B cell (primary cell): ENCODE measurements at regions of chr20 and their contacts with region 1.

Region 1: DNA sequence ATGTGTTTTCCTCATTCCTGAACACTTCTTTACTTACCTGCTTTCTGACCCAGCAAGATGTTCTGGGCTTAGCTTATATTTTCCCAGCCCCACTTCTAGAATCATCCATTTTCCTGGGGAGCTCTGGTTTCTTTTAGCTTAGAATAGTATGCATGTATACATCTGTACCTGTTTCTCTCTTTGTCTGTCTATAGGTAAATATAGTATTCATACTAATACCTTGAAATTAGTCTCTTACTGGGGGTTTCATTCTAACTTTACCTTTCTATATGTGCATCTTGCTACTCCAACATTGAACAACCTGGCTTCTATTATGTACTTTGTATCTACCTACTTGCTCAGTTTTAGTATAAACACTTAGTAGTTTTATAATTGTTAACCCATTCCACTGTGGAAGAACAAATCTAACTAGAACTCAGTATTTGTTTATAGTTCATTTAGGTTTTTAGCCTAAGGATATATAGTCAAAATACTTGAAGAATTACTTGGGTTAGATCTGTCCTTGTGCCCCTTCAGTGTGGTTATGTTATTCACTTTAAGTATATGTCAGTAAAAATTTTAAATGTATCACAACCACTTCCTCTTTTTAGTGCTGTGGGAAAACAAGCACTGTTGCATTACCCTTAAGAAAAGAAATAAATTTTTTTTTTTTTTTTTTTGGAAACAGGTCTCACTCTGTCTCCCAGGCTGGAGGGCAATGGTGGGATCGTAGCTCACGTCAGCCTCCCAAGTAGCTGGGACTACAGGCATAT is 54.0 kb downstream of the ASXL1 start:
- DNase-seq: peak; percentile 50
- ATAC-seq: peak; percentile 54
- H3K4me3 ChIP-seq: peak overlapping the region in 1 of 5 experiments; percentile 15
- H3K4me3 Mint-ChIP-seq: peak overlapping the region; percentile 21
- H3K27ac ChIP-seq: peak overlapping the region in 1 of 2 donors; percentile 48
- H3K27ac Mint-ChIP-seq: peak overlapping the region; percentile 58
- H3K4me1 ChIP-seq: peaks cover 22% of the 10 kb centered on the region in 2 donors
- H3K4me1 Mint-ChIP-seq: peaks cover 48% of the 10 kb centered on the region
- H3K27me3 ChIP-seq: no peaks in the 10 kb centered on the region
- H3K27me3 Mint-ChIP-seq: no peaks in the 10 kb centered on the region
- CTCF ChIP-seq: no peak

Region 2: GRCh38 chr20:32378461-32378860 is 33.7 kb before region 1 on chr20:
- CTCF ChIA-PET with region 1: no interaction called
- POLR2A ChIA-PET with region 1: interaction called, 10 read pairs
- intact Hi-C with region 1: no loop called
- DNase-seq: no peak
- ATAC-seq: no peak
- H3K4me3 ChIP-seq: no peak overlapping the region
- H3K4me3 Mint-ChIP-seq: no peak overlapping the region
- H3K27ac ChIP-seq: no peak overlapping the region
- H3K27ac Mint-ChIP-seq: no peak overlapping the region
- H3K4me1 ChIP-seq: no peaks in the 10 kb centered on the region
- H3K4me1 Mint-ChIP-seq: no peaks in the 10 kb centered on the region
- H3K27me3 ChIP-seq: no peaks in the 10 kb centered on the region
- H3K27me3 Mint-ChIP-seq: no peaks in the 10 kb centered on the region
- CTCF ChIP-seq: no peak